ENCODE measurements at regions of chr10 and their contacts with region 1.

Region 1: DNA sequence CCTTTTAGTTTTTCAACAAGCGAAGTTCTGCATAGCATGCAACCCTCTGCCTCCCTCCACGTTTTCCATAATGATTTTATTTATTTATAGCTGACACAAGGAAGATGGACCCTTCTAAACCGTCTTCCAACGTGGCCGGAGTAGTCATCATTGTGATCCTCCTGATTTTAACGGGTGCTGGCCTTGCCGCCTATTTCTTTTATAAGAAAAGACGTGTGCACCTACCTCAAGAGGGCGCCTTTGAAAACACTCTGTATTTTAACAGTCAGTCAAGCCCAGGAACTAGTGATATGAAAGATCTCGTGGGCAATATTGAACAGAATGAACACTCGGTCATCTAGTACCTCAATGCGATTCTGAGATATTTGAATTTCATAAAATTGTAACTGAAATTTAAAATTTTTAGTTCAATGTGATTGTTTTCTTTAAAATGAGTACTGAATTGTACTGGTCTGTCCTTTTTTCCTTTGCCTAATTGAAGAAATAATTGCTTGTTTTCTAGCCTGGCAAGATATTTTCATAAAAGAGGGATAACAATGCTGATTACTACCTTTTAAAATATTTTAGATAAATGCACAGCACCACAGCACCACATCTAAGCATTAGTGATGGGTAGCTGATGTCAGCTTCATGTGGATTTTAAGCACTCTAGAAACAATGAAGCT is 41.5 kb upstream of the SLC39A12 start:
- ATAC-seq: peak; percentile 29 to 95 (median 82)
- H3K4me3 ChIP-seq: no peak overlapping the region
- H3K27ac ChIP-seq: no peak overlapping the region
- H3K4me1 ChIP-seq: peaks cover 0 to 6% of the 10 kb centered on the region in 2 donors

Region 2: GRCh38 chr10:17548770-17549169 is 361.5 kb before region 1 on chr10:
- in situ Hi-C with region 1: no loop called
- ATAC-seq: peak in 7 of 8 experiments; percentile 33 to 81 (median 63)
- H3K4me3 ChIP-seq: no peak overlapping the region
- H3K27ac ChIP-seq: no peak overlapping the region
- H3K4me1 ChIP-seq: peaks cover 0 to 5% of the 10 kb centered on the region in 2 donors

Region 3: GRCh38 chr10:17716161-17716560 is 194.1 kb before region 1 on chr10:
- in situ Hi-C with region 1: no loop called
- ATAC-seq: no peak
- H3K4me3 ChIP-seq: no peak overlapping the region
- H3K27ac ChIP-seq: no peak overlapping the region
- H3K4me1 ChIP-seq: peaks cover 3 to 5% of the 10 kb centered on the region in 2 donors

Region 4: GRCh38 chr10:18113881-18114280 is 203.6 kb after region 1 on chr10:
- in situ Hi-C with region 1: no loop called
- ATAC-seq: no peak
- H3K4me3 ChIP-seq: no peak overlapping the region
- H3K27ac ChIP-seq: no peak overlapping the region
- H3K4me1 ChIP-seq: no peaks in the 10 kb centered on the region

Region 5: GRCh38 chr10:18194634-18195033 is 284.4 kb after region 1 on chr10:
- in situ Hi-C with region 1: no loop called
- ATAC-seq: no peak
- H3K4me3 ChIP-seq: no peak overlapping the region
- H3K27ac ChIP-seq: no peak overlapping the region
- H3K4me1 ChIP-seq: no peaks in the 10 kb centered on the region

Region 6: GRCh38 chr10:18238870-18239485 is 328.7 kb after region 1 on chr10:
- in situ Hi-C with region 1: loop called in 1 of 9 experiments (anchors 25 kb)
- ATAC-seq: peak in 3 of 8 experiments; percentile 20 to 39 (median 27)
- H3K4me3 ChIP-seq: no peak overlapping the region
- H3K27ac ChIP-seq: no peak overlapping the region
- H3K4me1 ChIP-seq: peaks cover 0 to 2% of the 10 kb centered on the region in 2 donors